CD4-positive, alpha-beta T cell (primary cell): ENCODE measurements at regions of chrX and their contacts with region 1.

Region 1: DNA sequence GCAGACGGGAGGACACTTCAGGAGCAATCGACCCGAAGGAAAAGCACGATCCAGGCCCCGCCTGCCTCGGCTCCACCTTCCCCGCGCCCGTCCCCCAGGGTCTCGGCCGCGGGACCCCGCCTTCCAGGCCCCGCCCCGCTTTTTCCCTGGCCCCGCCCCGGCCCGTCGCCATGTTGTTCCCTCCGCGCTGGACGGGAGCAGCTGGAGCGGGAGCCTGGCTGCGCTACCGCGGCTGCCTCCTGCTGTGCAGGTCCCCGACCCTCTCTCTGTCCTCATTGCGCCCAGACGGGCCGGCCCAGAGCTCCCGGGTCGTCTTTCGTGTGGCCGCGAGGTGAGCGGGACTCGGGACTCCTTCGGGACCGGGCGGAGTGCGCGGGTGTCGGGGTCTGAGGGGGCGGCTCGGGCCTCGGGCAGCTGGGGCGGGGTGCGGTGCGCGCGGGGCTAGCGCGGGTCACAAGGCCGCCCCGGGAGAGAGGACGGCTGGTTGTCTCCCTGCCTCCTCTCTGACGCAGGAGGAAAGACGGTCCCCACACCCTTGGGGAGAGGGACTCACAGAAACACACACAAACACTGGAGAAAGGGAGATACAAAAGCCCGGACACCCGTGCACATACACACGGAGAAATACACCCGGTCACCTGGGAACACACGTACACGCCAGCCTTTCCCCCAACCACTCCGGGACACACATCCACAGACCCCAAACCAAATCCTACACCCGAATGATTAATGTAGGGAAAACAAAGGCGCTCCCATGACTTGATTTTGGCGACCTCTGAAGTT is at the start of gene RAB9A:
- DNase-seq: peak; percentile 59 to 87 (median 72)
- ATAC-seq: peak; percentile 88
- H3K4me3 ChIP-seq: peak within 1 kb of the TSS; percentile 81
- H3K4me3 Mint-ChIP-seq: peak within 1 kb of the TSS; percentile 95
- H3K27ac ChIP-seq: peak within 1 kb of the TSS; percentile 70 to 86
- H3K27ac Mint-ChIP-seq: peak within 1 kb of the TSS; percentile 93
- H3K4me1 ChIP-seq: peaks cover 29% of the 10 kb centered on the region
- H3K4me1 Mint-ChIP-seq: peaks cover 57% of the 10 kb centered on the region
- H3K27me3 ChIP-seq: no peaks in the 10 kb centered on the region
- H3K27me3 Mint-ChIP-seq: no peaks in the 10 kb centered on the region
- CTCF ChIP-seq: no peak
- total RNA-seq, gene RAB9A: 21.4 to 25.2 TPM

Region 2: GRCh38 chrX:12791257-12792228 is 897.6 kb before region 1 on chrX and contains the start of gene PRPS2:
- CTCF ChIA-PET with region 1: no interaction called
- POLR2A ChIA-PET with region 1: no interaction called
- intact Hi-C with region 1: loop called in 1 of 2 experiments (anchors 5 kb)
- DNase-seq: peak; percentile 46 to 84 (median 68)
- ATAC-seq: peak; percentile 95
- H3K4me3 ChIP-seq: peak within 1 kb of the TSS; percentile 77
- H3K4me3 Mint-ChIP-seq: peak within 1 kb of the TSS; percentile 89
- H3K27ac ChIP-seq: no peak within 1 kb of the TSS
- H3K27ac Mint-ChIP-seq: peak within 1 kb of the TSS; percentile 78
- H3K4me1 ChIP-seq: peaks cover 12% of the 10 kb centered on the region
- H3K4me1 Mint-ChIP-seq: peaks cover 36% of the 10 kb centered on the region
- H3K27me3 ChIP-seq: no peaks in the 10 kb centered on the region
- H3K27me3 Mint-ChIP-seq: no peaks in the 10 kb centered on the region
- CTCF ChIP-seq: no peak
- total RNA-seq, gene PRPS2: 13.2 to 17.7 TPM

Region 3: GRCh38 chrX:13658602-13659001 is 30.5 kb before region 1 on chrX:
- CTCF ChIA-PET with region 1: interaction called, 5 read pairs
- POLR2A ChIA-PET with region 1: interaction called, 23 read pairs
- intact Hi-C with region 1: loop called (anchors 1 to 2 kb)
- DNase-seq: peak in 4 of 14 experiments; percentile 14 to 76 (median 74)
- ATAC-seq: peak; percentile 59
- H3K4me3 ChIP-seq: no peak overlapping the region
- H3K4me3 Mint-ChIP-seq: peak overlapping the region; percentile 7
- H3K27ac ChIP-seq: peak overlapping the region in 1 of 2 donors; percentile 22
- H3K27ac Mint-ChIP-seq: peak overlapping the region; percentile 82
- H3K4me1 ChIP-seq: peaks cover 7% of the 10 kb centered on the region
- H3K4me1 Mint-ChIP-seq: peaks cover 24% of the 10 kb centered on the region
- H3K27me3 ChIP-seq: no peaks in the 10 kb centered on the region
- H3K27me3 Mint-ChIP-seq: no peaks in the 10 kb centered on the region
- CTCF ChIP-seq: no peak

Region 4: GRCh38 chrX:13721819-13722519 is 32.8 kb after region 1 on chrX:
- CTCF ChIA-PET with region 1: interaction called, 3 read pairs
- POLR2A ChIA-PET with region 1: interaction called, 10 read pairs
- intact Hi-C with region 1: no loop called
- DNase-seq: no peak
- ATAC-seq: no peak
- H3K4me3 ChIP-seq: no peak overlapping the region
- H3K4me3 Mint-ChIP-seq: no peak overlapping the region
- H3K27ac ChIP-seq: no peak overlapping the region
- H3K27ac Mint-ChIP-seq: peak overlapping the region; percentile 58
- H3K4me1 ChIP-seq: peaks cover 38% of the 10 kb centered on the region
- H3K4me1 Mint-ChIP-seq: peaks cover 71% of the 10 kb centered on the region
- H3K27me3 ChIP-seq: no peaks in the 10 kb centered on the region
- H3K27me3 Mint-ChIP-seq: no peaks in the 10 kb centered on the region
- CTCF ChIP-seq: no peak

Region 5: DNA sequence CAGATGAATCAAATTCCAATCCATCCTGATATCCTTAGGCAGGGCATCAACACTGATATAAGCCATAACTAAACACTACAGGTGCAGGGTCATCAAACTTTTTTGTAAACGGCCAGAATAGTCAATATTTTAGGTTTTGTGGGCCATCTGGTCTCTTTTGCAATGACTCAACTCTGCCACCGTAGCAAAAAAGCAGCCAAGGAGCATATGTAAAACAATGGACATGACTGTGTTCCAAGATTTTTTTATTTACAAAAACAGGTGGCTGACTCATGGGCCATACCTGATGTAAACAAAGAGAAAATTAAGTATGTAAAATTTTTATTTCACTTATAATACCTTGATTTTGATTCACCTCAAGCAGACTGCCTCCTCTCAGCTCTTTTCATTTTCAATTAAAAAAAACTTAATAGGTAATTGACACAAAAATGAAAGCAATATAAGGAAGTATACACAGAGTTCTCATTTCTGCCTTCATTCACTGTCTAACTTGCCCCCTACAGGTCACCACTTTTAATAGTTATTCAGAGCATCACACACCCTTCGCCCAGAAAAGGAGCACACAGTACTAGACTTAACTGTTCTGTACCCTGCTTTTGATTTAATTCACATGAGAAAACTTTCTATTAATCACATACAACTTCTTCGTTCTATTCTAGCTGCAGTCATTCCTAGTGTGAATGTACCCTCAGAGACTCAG is 163.0 kb after region 1 on chrX:
- CTCF ChIA-PET with region 1: no interaction called
- POLR2A ChIA-PET with region 1: no interaction called
- intact Hi-C with region 1: no loop called
- DNase-seq: no peak
- ATAC-seq: no peak
- H3K4me3 ChIP-seq: no peak overlapping the region
- H3K4me3 Mint-ChIP-seq: no peak overlapping the region
- H3K27ac ChIP-seq: no peak overlapping the region
- H3K27ac Mint-ChIP-seq: no peak overlapping the region
- H3K4me1 ChIP-seq: no peaks in the 10 kb centered on the region
- H3K4me1 Mint-ChIP-seq: no peaks in the 10 kb centered on the region
- H3K27me3 ChIP-seq: no peaks in the 10 kb centered on the region
- H3K27me3 Mint-ChIP-seq: peaks cover 12% of the 10 kb centered on the region
- CTCF ChIP-seq: no peak